ENCODE measurements at regions of chr10 and their contacts with region 1.

Region 1: GRCh38 chr10:29590915-29591650 is 43.7 kb downstream of the SVIL start:
- DNase-seq: no peak
- H3K4me3 ChIP-seq: no peak overlapping the region
- H3K4me3 Mint-ChIP-seq: peak overlapping the region in 1 of 2 donors; percentile 76
- H3K27ac ChIP-seq: no peak overlapping the region
- H3K27ac Mint-ChIP-seq: peak overlapping the region; percentile 79 to 96 (median 92)
- H3K4me1 ChIP-seq: peaks cover 28 to 31% of the 10 kb centered on the region in 2 donors
- H3K4me1 Mint-ChIP-seq: peaks cover 38% of the 10 kb centered on the region
- H3K27me3 ChIP-seq: no peaks in the 10 kb centered on the region
- H3K27me3 Mint-ChIP-seq: peaks cover 0 to 2% (median 0%) of the 10 kb centered on the region in 3 donors
- CTCF ChIP-seq: peak; percentile 68

Region 2: DNA sequence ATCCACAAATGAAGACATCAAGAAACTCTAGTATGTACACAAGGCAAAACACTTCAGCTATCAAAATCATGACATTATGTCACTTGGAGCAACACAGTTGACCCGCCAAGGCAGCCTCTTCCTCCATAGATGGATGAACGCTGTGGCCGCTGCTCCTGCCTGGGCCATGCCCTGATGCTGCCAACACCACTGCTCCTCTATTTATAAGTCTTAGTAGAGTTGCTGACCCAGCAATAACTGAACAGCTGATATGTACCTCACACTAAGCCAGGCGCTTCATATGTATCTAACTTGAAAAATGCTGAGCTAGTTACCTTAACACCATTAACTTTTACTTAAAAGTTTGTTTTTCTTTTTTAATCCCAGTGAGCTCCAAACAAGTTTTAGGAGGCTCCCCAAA is 170.3 kb before region 1 on chr10:
- intact Hi-C with region 1: no loop called
- DNase-seq: no peak
- H3K4me3 ChIP-seq: no peak overlapping the region
- H3K4me3 Mint-ChIP-seq: no peak overlapping the region
- H3K27ac ChIP-seq: no peak overlapping the region
- H3K27ac Mint-ChIP-seq: no peak overlapping the region
- H3K4me1 ChIP-seq: no peaks in the 10 kb centered on the region
- H3K4me1 Mint-ChIP-seq: no peaks in the 10 kb centered on the region
- H3K27me3 ChIP-seq: no peaks in the 10 kb centered on the region
- H3K27me3 Mint-ChIP-seq: no peaks in the 10 kb centered on the region
- CTCF ChIP-seq: no peak

Region 3: DNA sequence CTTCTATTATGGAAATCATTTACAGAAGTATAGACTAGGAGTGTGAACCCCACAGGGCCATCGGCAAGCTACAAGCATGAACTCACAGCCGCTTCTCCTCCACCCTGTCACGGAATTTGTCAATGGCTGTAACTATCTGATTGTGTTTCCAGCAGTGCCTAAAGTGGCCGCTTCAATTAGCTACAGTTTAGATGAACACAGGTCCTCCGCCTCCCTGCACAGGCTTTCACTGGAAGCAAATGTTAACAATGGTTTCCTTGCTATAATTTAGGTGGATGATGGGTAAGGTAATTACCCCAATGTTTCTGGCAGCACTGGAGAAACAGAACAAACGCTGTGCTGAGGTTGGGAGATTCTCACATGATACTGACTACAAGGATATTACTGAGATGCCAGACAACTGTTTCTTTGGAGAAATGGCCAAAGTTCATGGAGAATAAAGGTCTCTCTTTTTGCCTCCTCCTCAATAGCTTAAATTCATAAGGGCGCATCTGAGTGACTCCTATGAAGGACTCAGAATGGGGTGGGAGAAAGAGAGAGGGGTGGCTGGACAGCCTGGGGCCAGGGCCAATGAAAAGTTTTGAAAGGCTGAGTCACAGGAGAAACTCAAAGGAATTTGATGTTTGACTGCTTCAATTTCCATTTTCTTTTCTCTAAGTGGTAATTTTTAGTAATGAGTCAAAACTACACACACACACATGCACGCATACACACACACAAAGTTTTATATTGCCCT is 35.2 kb before region 1 on chr10:
- intact Hi-C with region 1: loop called in 1 of 2 experiments (anchors 5 kb)
- DNase-seq: peak in 2 of 3 donors; percentile 10 to 18
- H3K4me3 ChIP-seq: no peak overlapping the region
- H3K4me3 Mint-ChIP-seq: no peak overlapping the region
- H3K27ac ChIP-seq: peak overlapping the region in 1 of 2 donors; percentile 65
- H3K27ac Mint-ChIP-seq: peak overlapping the region; percentile 38 to 87 (median 74)
- H3K4me1 ChIP-seq: peaks cover 8 to 20% of the 10 kb centered on the region in 2 donors
- H3K4me1 Mint-ChIP-seq: peaks cover 24% of the 10 kb centered on the region
- H3K27me3 ChIP-seq: no peaks in the 10 kb centered on the region
- H3K27me3 Mint-ChIP-seq: peaks cover 0 to 2% (median 0%) of the 10 kb centered on the region in 3 donors
- CTCF ChIP-seq: no peak